ENCODE measurements at regions of chr15 and their contacts with region 1.

Region 1: DNA sequence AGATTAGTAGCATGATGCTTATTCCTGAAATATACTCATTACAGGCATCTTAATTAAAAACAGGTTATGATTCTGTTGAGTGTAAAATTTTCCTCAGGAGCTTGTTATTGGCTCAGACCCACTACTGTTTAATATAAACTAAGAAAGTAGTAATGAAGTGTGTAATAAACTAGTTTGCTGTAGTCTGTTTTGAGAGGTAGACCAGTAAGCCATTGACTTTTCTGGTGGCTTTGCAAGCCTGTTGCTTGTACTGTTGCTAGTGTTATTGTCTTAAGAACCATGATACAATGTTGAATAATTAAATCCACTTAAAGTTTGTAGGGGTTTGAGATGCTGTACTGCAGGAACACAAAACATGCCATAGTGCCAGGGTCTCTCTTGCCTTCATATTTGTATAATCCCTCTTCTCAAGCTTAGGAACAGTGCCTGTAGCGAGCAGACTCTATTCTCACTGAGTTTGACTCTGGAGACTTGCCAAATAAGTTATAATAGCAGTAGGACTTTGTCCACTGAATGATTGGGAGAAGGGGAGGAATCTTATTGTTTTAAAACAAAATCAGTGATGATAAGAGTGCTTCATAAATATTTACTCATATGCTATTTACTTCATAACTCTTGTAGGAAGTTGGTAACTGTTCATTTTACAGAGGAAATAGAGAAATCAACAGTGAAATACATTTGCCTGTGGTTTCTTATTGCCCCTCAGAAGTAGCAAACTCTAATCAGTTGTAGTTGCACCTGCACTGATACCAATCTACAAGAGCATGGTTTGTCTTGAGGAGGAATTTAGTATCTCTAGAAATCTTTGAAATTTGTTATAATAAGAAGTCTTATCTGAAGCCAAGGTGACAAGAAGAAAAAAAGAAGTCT is 13.4 kb downstream of the TCF12 start:
- DNase-seq: no peak
- ATAC-seq: peak in 3 of 4 donors; percentile 53 to 61 (median 57)
- H3K4me3 ChIP-seq: no peak overlapping the region
- H3K27ac ChIP-seq: no peak overlapping the region
- H3K4me1 ChIP-seq: peaks cover 0 to 72% (median 49%) of the 10 kb centered on the region in 12 donors
- H3K27me3 ChIP-seq: no peaks in the 10 kb centered on the region
- CTCF ChIP-seq: no peak
- POLR2A ChIP-seq: no peak

Region 2: DNA sequence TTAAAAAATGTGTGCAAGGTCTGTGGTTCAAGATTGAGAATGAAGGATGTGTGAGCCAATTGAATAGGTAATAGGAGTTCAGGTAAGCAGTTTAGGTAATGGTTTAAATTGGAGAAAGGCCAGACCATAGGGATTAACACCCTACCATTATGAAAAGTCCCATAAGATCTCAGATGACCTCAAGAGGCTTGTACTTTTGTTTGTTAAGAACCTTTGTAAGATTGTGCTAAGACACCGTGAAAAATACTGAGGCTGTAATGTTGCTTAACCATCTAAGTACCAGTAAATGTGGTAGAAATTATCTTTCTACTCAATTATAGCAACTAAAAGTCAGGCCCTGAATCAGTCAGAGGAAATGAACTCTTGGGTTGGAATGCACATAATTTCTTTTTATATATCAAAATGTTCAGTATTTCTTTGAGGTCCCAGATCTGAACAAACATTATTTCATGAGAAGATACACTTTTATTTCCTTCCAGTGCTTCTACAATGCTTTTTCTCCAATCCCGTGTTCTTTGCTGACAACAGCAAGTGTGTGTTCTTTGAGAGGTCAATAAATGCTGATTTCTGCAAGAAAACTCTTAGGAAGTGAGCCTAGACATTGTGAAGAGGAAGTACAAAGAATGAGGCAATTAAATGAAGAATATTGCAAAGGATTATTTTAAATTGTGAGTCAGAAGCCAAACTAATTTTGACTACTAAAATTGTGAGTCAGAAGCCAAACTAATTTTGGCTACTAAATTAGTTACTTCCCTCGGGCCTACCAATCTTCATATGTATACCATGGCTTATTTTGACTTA is 53.0 kb after region 1 on chr15:
- intact Hi-C with region 1: loop called in 2 of 10 experiments (anchors 10 kb)
- DNase-seq: no peak
- ATAC-seq: peak in 3 of 4 donors; percentile 41 to 71 (median 60)
- H3K4me3 ChIP-seq: no peak overlapping the region
- H3K27ac ChIP-seq: peak overlapping the region in 5 of 12 donors; percentile 21 to 78 (median 34)
- H3K4me1 ChIP-seq: peaks cover 0 to 92% (median 57%) of the 10 kb centered on the region in 12 donors
- H3K27me3 ChIP-seq: no peaks in the 10 kb centered on the region
- CTCF ChIP-seq: no peak
- POLR2A ChIP-seq: no peak

Region 3: GRCh38 chr15:57165992-57166391 is 234.1 kb after region 1 on chr15:
- intact Hi-C with region 1: no loop called
- DNase-seq: no peak
- ATAC-seq: peak in 1 of 4 donors; percentile 63
- H3K4me3 ChIP-seq: no peak overlapping the region
- H3K27ac ChIP-seq: no peak overlapping the region
- H3K4me1 ChIP-seq: peaks cover 0 to 15% (median 0%) of the 10 kb centered on the region in 12 donors
- H3K27me3 ChIP-seq: no peaks in the 10 kb centered on the region
- CTCF ChIP-seq: no peak
- POLR2A ChIP-seq: no peak